Natural killer cell (primary cell): ENCODE measurements at regions of chr12 and their contacts with region 1.

Region 1: GRCh38 chr12:130044991-130045621 is 117.2 kb upstream of the FZD10 start:
- DNase-seq: no peak
- ATAC-seq: no peak
- H3K4me3 ChIP-seq: no peak overlapping the region
- H3K4me3 Mint-ChIP-seq: no peak overlapping the region
- H3K27ac ChIP-seq: no peak overlapping the region
- H3K27ac Mint-ChIP-seq: no peak overlapping the region
- H3K4me1 ChIP-seq: no peaks in the 10 kb centered on the region
- H3K4me1 Mint-ChIP-seq: peaks cover 0 to 6% of the 10 kb centered on the region in 2 donors
- H3K27me3 ChIP-seq: peaks cover 2% of the 10 kb centered on the region
- H3K27me3 Mint-ChIP-seq: peaks cover 25 to 41% of the 10 kb centered on the region in 2 donors
- CTCF ChIP-seq: no peak

Region 2: DNA sequence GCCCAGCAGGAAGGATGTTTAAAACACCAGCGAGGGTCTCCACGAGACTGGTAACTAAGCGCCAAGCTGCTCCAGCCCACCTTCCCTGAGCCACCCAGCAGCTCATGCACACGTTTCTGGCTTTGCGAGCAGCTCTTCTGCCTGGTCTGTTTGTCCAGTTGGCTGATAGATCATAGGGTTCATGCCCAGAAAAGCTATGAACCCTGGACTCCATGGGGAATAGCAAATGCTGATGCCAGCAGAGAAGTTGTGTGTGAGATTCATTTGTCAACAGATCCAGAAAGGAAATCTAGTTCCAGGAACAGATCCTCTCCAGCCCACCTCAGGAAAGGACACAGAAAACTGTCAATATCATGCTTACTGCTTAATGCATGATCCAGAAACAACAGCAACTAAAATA is 699.2 kb after region 1 on chr12:
- intact Hi-C with region 1: loop called (anchors 5 kb)
- DNase-seq: no peak
- ATAC-seq: no peak
- H3K4me3 ChIP-seq: no peak overlapping the region
- H3K4me3 Mint-ChIP-seq: no peak overlapping the region
- H3K27ac ChIP-seq: no peak overlapping the region
- H3K27ac Mint-ChIP-seq: no peak overlapping the region
- H3K4me1 ChIP-seq: peaks cover 4% of the 10 kb centered on the region
- H3K4me1 Mint-ChIP-seq: peaks cover 6% of the 10 kb centered on the region in 2 donors
- H3K27me3 ChIP-seq: no peaks in the 10 kb centered on the region
- H3K27me3 Mint-ChIP-seq: peaks cover 12 to 32% of the 10 kb centered on the region in 2 donors
- CTCF ChIP-seq: no peak